CD14-positive monocyte (primary cell): ENCODE measurements at regions of chr3 and their contacts with region 1.

Region 1: DNA sequence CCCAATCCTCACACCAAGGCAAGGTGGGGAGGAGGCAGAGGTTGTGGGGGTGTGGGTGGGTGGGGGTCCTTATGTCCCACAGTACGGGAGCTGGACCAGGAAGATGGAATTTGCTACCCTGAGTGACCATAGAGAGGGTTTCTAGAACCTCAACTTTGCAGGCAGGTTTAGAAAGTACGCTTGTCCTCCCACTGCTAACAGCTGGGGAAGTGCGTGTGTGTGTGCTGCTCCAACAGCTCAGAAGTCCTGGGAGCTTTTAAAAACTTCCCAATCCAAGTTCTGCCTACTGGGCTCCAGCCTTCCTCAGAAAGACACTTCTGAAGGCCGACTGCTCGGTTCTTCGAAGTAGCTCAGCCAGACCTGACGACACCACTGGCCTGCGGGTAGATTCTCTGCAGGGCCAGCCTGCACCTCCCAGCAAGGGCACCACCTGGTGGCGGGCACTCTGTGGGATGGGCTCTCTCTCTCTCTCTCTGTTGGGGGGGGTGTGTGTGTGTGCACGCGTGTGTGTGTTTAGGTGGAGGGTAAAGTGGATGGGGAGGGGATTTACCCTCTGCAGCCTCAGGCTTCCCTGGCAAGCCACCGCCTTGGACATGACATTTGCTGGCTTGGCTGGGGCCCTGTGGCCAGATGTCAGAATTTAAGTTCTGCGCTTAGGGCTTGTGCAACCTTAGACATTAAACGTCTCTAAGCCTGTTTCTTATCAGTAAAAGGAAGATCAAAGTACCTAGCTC is 15.6 kb downstream of the TMEM158 start:
- DNase-seq: peak; percentile 78 to 82 (median 79)
- H3K4me3 ChIP-seq: no peak overlapping the region
- H3K4me3 Mint-ChIP-seq: peak overlapping the region in 1 of 2 donors; percentile 63
- H3K27ac ChIP-seq: no peak overlapping the region
- H3K27ac Mint-ChIP-seq: peak overlapping the region in 2 of 7 donors; percentile 54 to 63
- H3K4me1 ChIP-seq: no peaks in the 10 kb centered on the region
- H3K4me1 Mint-ChIP-seq: peaks cover 16% of the 10 kb centered on the region
- H3K27me3 ChIP-seq: no peaks in the 10 kb centered on the region
- H3K27me3 Mint-ChIP-seq: peaks cover 0 to 2% (median 0%) of the 10 kb centered on the region in 3 donors
- CTCF ChIP-seq: peak; percentile 86

Region 2: DNA sequence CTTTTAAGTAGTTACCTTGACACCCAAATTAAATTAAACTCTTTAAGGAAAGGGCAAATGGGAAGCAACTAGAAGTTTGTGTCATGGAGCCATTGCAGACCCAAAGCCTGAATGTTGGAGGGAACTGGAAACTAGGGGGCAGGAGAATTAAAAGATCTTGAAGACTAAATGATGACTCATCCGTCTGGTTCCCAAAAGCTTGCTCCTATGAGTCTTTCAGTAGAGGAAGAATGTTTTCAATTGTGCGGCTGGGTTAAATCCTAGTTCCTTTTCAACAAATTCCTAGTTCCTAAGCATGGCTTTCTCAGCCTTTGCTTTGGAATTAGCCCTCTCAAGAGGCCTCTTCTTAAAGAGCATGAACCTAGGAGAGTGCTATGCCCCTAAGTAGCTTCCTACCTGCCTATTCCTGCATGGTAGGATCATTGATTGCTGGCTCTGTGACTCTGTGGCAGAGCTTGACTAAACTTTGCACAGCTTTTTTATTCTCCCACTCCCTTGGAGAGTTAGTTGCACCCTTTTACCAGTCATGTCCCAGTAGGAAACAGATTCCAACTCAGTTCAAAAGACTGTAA is 166.7 kb before region 1 on chr3:
- intact Hi-C with region 1: loop called (anchors 1 to 2 kb)
- DNase-seq: peak; percentile 63 to 95 (median 89)
- H3K4me3 ChIP-seq: no peak overlapping the region
- H3K4me3 Mint-ChIP-seq: no peak overlapping the region
- H3K27ac ChIP-seq: peak overlapping the region in 1 of 2 donors; percentile 42
- H3K27ac Mint-ChIP-seq: peak overlapping the region; percentile 68 to 93 (median 83)
- H3K4me1 ChIP-seq: peaks cover 19 to 42% of the 10 kb centered on the region in 2 donors
- H3K4me1 Mint-ChIP-seq: peaks cover 41% of the 10 kb centered on the region
- H3K27me3 ChIP-seq: no peaks in the 10 kb centered on the region
- H3K27me3 Mint-ChIP-seq: peaks cover 0 to 6% (median 3%) of the 10 kb centered on the region in 3 donors
- CTCF ChIP-seq: no peak

Region 3: GRCh38 chr3:45499529-45499928 is 289.1 kb after region 1 on chr3:
- intact Hi-C with region 1: loop called in 1 of 2 experiments (anchors 5 kb)
- DNase-seq: peak; percentile 5 to 23 (median 15)
- H3K4me3 ChIP-seq: no peak overlapping the region
- H3K4me3 Mint-ChIP-seq: no peak overlapping the region
- H3K27ac ChIP-seq: no peak overlapping the region
- H3K27ac Mint-ChIP-seq: no peak overlapping the region
- H3K4me1 ChIP-seq: no peaks in the 10 kb centered on the region
- H3K4me1 Mint-ChIP-seq: no peaks in the 10 kb centered on the region
- H3K27me3 ChIP-seq: no peaks in the 10 kb centered on the region
- H3K27me3 Mint-ChIP-seq: peaks cover 0 to 2% (median 0%) of the 10 kb centered on the region in 3 donors
- CTCF ChIP-seq: peak; percentile 72